Head of caudate nucleus (tissue), 42 donors: ENCODE measurements at regions of chr1 and their contacts with region 1.

Region 1: GRCh38 chr1:243742819-243743218 is 107.2 kb downstream of the AKT3 start:
- DNase-seq: no peak

Region 2: DNA sequence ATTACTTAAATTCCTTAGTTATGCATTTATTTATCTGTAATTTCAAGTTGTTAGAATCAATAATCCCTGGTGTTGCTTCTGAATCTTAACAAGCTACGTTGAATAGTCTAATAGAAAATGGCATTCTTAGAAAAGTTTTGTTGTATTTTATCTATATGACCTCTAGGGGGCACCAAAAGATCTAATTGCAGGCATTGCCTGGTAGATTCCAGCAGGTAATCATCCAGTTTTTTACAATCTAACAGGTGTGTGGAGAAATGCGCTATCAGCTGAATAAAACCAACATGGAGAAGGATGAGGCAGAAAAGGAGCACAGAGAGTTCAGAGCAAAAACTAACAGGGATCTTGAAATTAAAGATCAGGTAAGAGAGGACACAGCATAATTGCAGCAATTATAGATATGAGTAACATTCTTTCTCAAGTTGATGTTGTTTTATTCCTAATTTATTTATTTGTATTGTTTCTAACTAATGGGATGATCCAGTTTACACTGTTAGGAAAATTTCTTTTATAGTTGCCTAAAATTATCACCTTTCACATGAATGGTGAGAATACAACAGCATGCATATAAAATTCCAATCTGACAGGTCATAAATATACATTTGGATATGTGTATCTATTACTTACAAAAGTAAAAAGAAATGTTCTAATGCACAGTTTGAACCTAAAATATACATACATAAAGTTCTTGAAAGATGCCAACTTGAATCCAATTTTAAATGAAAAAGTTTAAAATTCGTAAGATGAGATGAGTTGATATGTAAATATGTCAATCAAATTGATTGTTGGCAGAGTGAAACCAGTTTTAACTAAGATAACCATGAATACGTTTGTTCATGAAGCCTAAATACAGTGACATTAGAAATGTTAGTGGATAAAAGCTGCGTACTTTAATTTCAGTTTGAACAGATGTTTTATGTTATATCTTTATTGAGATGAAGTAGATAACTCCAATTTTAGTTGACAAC is 398.6 kb before region 1 on chr1:
- intact Hi-C with region 1: loop called (anchors 5 kb)
- DNase-seq: peak in 1 of 42 donors; percentile 24

Region 3: DNA sequence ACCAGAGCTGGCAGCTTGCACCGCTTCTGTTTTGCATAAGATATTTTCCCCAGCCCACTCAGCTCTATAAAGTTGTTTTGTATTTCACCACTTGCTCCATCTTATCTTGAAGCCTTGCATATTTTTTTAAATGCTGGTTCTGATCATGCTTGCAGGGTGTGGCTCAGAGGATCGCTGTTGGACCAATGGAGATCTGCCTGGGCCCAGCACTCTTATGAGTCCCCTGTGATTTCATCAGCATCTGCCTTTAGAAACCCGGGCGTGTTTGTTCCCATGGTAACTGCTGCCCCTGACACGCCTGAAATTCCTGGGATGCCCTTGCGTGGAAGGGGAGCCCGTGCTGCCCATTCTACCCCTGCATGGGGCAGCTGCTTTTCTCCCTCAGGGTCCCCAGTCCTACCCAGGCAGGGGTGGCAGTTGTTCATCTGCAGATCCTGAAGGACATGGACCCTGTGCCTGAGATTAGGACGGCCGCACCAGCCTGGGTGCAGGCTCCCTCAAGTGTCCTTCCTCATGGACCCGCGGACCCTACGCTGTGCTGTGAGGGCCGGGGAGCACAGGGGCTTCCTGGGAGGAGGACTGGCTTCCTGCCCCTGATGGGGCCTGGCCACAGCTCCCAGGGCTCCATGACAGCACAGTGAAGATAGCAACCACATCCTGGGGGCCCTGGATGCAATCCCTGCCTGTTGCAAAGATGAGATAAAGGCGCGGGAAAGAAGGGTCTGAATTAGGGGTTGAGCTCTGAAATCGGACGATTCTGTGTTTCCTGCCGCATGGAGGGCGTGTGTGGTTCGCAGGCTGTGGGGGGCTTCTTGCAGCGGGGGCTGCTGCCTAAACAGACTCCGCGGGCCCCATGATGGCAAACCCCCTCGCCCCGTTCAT is 260.4 kb before region 1 on chr1:
- intact Hi-C with region 1: loop called (anchors 5 kb)
- DNase-seq: peak in 4 of 42 donors; percentile 26 to 64 (median 36)

Region 4: GRCh38 chr1:243559575-243560162 is 183.2 kb before region 1 on chr1:
- intact Hi-C with region 1: no loop called
- DNase-seq: no peak

Region 5: GRCh38 chr1:243882276-243882675 is 139.5 kb after region 1 on chr1:
- intact Hi-C with region 1: no loop called
- DNase-seq: no peak

Region 6: DNA sequence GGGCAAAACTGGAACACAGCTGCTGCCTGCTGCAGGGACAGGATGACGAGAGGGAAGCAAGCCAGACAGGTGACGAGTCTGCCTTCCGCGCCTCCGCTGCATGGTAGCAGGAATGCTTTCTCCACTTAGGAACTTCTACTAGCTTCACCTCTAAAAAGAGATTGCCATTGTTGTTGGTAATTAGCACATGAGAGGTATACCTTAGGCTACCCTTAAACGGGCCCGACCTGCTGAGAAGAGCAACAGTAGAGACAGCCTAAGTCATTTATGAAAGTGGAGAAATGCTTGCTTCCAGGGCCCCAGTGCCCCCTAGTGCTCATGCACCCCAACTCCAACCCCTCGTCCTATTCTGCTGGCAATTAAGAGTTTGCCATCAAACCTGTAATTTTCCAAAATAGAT is 204.1 kb after region 1 on chr1:
- intact Hi-C with region 1: no loop called
- DNase-seq: peak in 32 of 42 donors; percentile 20 to 73 (median 44)